ENCODE measurements at regions of chr11 and their contacts with region 1.

Region 1: GRCh38 chr11:64887757-64888405 is 9.5 kb upstream of the EHD1 start:
- DNase-seq: peak; percentile 74 to 94 (median 84)
- ATAC-seq: peak; percentile 92
- H3K4me3 ChIP-seq: peak overlapping the region; percentile 50
- H3K4me3 Mint-ChIP-seq: peak overlapping the region; percentile 15 to 89 (median 80)
- H3K27ac ChIP-seq: peak overlapping the region; percentile 49
- H3K27ac Mint-ChIP-seq: peak overlapping the region in 8 of 9 donors; percentile 51 to 95 (median 85)
- H3K4me1 ChIP-seq: peaks cover 15 to 21% of the 10 kb centered on the region in 2 donors
- H3K4me1 Mint-ChIP-seq: peaks cover 20 to 32% (median 28%) of the 10 kb centered on the region in 7 donors
- H3K27me3 ChIP-seq: no peaks in the 10 kb centered on the region
- H3K27me3 Mint-ChIP-seq: no peaks in the 10 kb centered on the region

Region 2: GRCh38 chr11:64784813-64785581 is 102.9 kb before region 1 on chr11:
- CTCF ChIA-PET with region 1: no interaction called
- POLR2A ChIA-PET with region 1: no interaction called
- intact Hi-C with region 1: no loop called
- DNase-seq: no peak
- ATAC-seq: no peak
- H3K4me3 ChIP-seq: no peak overlapping the region
- H3K4me3 Mint-ChIP-seq: no peak overlapping the region
- H3K27ac ChIP-seq: no peak overlapping the region
- H3K27ac Mint-ChIP-seq: peak overlapping the region in 8 of 9 donors; percentile 27 to 67 (median 52)
- H3K4me1 ChIP-seq: peaks cover 7 to 21% of the 10 kb centered on the region in 2 donors
- H3K4me1 Mint-ChIP-seq: peaks cover 11 to 27% (median 22%) of the 10 kb centered on the region in 7 donors
- H3K27me3 ChIP-seq: no peaks in the 10 kb centered on the region
- H3K27me3 Mint-ChIP-seq: no peaks in the 10 kb centered on the region

Region 3: DNA sequence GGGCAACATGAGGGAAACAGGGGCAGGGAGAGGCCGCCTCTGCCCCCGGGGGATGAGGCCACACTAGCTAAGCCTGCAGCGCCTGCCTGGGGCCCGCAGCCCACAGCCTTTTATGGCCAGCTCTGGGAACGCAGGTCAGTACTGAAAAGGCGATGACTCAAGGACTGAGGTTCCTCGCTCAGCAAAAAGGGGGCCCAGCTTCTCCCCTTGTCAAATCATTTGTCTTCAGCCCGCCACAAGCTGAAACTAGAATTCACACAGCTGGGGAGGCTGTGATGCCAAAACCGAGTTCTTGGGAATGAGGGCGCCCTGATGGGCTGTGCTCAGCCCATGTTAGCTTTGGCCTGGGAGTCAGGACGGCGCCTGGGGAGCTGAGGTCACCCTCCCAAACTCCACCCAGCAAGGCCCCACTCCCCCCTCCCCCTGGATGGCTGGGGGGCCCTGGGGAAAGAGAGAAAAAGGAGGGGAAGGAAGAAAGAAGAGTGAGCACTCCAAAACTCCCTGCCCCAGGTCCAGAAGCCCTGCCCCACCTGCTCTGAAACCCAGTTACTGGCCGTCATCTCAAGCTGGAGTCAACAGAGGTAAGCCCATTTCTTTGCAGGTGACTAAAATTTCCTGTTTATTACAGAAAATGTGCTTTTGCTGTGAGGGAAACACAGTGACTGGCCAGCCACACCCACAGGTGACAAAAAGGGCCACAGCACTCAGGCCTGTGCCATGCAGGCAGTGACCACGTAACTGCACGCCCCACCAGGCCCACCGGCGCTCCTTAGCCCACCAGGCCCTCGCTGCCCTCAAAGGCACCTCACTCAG is 23.2 kb before region 1 on chr11:
- CTCF ChIA-PET with region 1: interaction called, 945 read pairs
- POLR2A ChIA-PET with region 1: interaction called, 1,324 read pairs
- intact Hi-C with region 1: loop called in 1 of 2 experiments (anchors 1 kb)
- DNase-seq: peak in 1 of 9 donors; percentile 63
- ATAC-seq: no peak
- H3K4me3 ChIP-seq: peak overlapping the region; percentile 45
- H3K4me3 Mint-ChIP-seq: peak overlapping the region; percentile 45 to 91 (median 78)
- H3K27ac ChIP-seq: peak overlapping the region; percentile 76
- H3K27ac Mint-ChIP-seq: peak overlapping the region; percentile 89 to 98 (median 96)
- H3K4me1 ChIP-seq: peaks cover 86 to 98% of the 10 kb centered on the region in 2 donors
- H3K4me1 Mint-ChIP-seq: peaks cover 68 to 94% (median 82%) of the 10 kb centered on the region in 7 donors
- H3K27me3 ChIP-seq: no peaks in the 10 kb centered on the region
- H3K27me3 Mint-ChIP-seq: no peaks in the 10 kb centered on the region

Measured in naive thymus-derived CD4-positive, alpha-beta T cell (primary cell).